ENCODE measurements at regions of chr6 and their contacts with region 1.

Region 1: DNA sequence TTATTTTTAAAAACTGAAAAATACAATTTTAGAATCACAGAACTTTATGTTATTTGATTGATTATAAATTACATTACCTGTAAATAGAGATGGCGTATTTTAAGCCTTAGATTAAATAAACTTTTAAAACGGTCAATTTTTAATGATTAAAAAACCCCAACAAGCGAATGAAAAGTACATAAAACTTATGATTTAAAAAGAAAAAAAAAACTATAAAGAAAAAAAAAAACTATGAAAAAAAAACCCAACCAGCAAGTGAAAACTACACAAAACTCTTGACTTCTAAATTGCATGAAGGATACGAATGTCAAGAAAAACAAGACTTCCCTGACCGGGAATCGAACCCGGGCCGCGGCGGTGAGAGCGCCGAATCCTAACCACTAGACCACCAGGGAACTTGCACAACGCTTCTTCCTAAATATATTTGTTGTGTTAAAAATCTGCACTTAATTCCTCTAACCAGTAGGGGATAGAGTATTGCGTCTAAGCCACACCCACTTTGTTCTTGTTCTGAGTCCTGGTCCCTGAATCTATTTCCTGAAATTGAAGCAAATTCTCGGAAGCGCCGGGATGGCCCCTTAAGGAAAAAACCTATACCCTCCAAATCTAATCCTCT is 10.7 kb upstream of the NCOA7 start:
- DNase-seq: peak; percentile 80 to 95
- H3K4me3 ChIP-seq: peak overlapping the region; percentile 63
- H3K27ac ChIP-seq: peak overlapping the region; percentile 94
- H3K4me1 ChIP-seq: peaks cover 38% of the 10 kb centered on the region
- H3K27me3 ChIP-seq: no peaks in the 10 kb centered on the region
- CTCF ChIP-seq: peak; percentile 31; the same call in 1 of the 2 replicates

Region 2: GRCh38 chr6:124792386-124792785 is 987.6 kb before region 1 on chr6:
- CTCF ChIA-PET with region 1: no interaction called
- POLR2A ChIA-PET with region 1: no interaction called
- intact Hi-C with region 1: no loop called
- DNase-seq: peak in 1 of 2 experiments; percentile 45
- H3K4me3 ChIP-seq: no peak overlapping the region
- H3K27ac ChIP-seq: no peak overlapping the region
- H3K4me1 ChIP-seq: no peaks in the 10 kb centered on the region
- H3K27me3 ChIP-seq: no peaks in the 10 kb centered on the region
- CTCF ChIP-seq: no peak

Region 3: GRCh38 chr6:125790358-125791150 is 10.5 kb after region 1 on chr6 and contains the start of gene NCOA7:
- CTCF ChIA-PET with region 1: interaction called, 4 read pairs
- POLR2A ChIA-PET with region 1: interaction called, 11 read pairs
- intact Hi-C with region 1: no loop called
- DNase-seq: peak; percentile 50 to 78
- H3K4me3 ChIP-seq: peak within 1 kb of the TSS; percentile 75
- H3K27ac ChIP-seq: peak within 1 kb of the TSS; percentile 48
- H3K4me1 ChIP-seq: peaks cover 53% of the 10 kb centered on the region
- H3K27me3 ChIP-seq: no peaks in the 10 kb centered on the region
- CTCF ChIP-seq: no peak
- total RNA-seq, gene NCOA7: 47.6 and 51.0 TPM in 2 replicates

Region 4: DNA sequence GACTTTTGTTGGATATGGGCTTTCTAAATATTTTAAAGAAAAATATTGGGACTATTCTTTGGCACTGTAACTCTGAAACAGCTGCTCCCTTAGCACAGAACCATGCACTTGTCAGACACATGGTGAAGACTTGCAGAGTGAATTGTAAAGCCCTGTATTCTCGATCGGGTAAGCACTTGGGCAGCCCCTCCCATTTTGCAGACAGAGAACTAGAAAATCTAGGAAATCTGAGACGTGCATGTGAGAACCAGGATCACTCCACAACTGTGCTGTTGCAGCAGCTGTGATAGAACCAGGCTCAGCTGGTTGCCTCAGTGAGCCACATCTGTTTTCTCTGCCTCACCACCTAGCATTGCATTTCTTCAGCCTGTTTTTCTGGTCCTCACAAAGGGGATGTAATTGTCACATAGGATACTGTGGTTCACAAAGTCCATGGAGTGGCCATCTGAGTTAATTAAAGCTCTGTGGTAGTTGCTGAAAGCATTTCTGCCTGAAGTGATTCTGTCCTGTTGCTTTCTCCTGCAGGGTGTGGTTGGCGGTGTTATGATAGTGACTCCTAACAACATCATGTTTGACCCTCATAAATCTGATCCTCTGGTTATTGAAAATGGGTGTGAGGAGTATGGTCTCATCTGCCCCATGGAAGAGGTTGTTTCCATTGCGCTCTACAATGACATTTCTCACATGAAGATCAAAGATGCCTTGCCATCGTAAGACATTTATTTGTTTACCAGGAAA is 104.8 kb after region 1 on chr6:
- CTCF ChIA-PET with region 1: no interaction called
- POLR2A ChIA-PET with region 1: interaction called, 11 read pairs
- intact Hi-C with region 1: no loop called
- DNase-seq: no peak
- H3K4me3 ChIP-seq: no peak overlapping the region
- H3K27ac ChIP-seq: no peak overlapping the region
- H3K4me1 ChIP-seq: no peaks in the 10 kb centered on the region
- H3K27me3 ChIP-seq: no peaks in the 10 kb centered on the region
- CTCF ChIP-seq: no peak

Region 5: GRCh38 chr6:125956506-125957390 is 176.7 kb after region 1 on chr6 and contains the start of gene HINT3:
- CTCF ChIA-PET with region 1: interaction called, 13 read pairs
- POLR2A ChIA-PET with region 1: interaction called, 3 read pairs
- intact Hi-C with region 1: loop called (anchors 1 kb)
- DNase-seq: peak; percentile 95 to 97
- H3K4me3 ChIP-seq: peak within 1 kb of the TSS; percentile 92
- H3K27ac ChIP-seq: peak within 1 kb of the TSS; percentile 80
- H3K4me1 ChIP-seq: peaks cover 21% of the 10 kb centered on the region
- H3K27me3 ChIP-seq: no peaks in the 10 kb centered on the region
- CTCF ChIP-seq: peak; percentile 99
- total RNA-seq, gene HINT3: 13.6 and 14.4 TPM in 2 replicates

Region 6: DNA sequence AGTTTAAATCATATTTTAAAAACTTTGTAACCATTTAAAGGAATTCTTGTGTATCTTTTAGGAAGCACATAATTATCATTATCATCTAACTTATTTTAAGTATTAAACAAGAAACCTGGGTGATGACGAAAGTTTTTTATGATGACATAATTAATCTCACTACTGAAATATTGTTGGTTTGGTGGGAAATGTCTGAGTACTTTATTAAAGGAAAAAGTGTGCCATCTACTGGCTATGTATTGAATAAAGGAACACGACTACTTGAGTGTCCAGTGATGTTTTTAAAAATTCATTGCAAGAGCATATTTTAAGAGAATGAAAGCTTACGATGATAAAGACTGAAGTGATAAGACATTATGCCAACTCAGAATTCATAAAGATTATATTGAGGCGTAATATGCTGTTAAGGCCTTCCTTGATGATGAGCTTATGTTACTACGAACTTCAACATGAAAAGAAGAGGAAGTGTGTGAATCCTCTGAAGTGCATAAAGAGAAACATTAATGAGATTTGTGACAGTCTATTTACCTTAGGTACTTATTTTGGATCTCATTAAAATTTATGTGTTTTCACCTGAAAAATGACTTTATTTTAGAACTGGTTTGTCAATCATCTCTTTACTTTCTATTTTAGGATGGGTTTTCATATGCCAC is 194.3 kb after region 1 on chr6:
- CTCF ChIA-PET with region 1: interaction called, 5 read pairs
- POLR2A ChIA-PET with region 1: no interaction called
- intact Hi-C with region 1: loop called (anchors 1 kb)
- DNase-seq: peak in 1 of 2 experiments; percentile 71
- H3K4me3 ChIP-seq: no peak overlapping the region
- H3K27ac ChIP-seq: peak overlapping the region; percentile 78
- H3K4me1 ChIP-seq: 0 out of 2 replicates have a peak, but pooled peaks cover 6% of the 10 kb centered on the region
- H3K27me3 ChIP-seq: no peaks in the 10 kb centered on the region
- CTCF ChIP-seq: peak; percentile 87

Region 7: DNA sequence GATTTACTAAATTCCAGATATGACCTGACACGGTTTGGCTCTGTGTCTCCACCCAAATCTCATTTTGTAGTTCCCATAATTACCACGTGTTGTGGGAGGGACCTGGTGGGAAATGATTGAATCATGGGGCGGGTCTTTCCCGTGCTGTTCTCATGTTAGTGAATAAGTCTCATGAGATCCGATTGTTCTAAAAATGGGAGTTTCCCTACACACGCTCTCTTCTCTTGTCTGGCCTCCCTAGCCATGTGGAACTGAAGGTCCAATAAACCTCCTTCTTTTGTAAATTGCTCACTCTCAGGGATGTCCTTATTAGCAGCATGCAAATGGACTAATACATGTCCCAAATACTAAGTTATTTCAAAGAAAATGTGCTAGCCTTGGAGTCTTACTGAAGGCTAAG is 681.0 kb after region 1 on chr6:
- CTCF ChIA-PET with region 1: no interaction called
- POLR2A ChIA-PET with region 1: no interaction called
- intact Hi-C with region 1: no loop called
- DNase-seq: no peak
- H3K4me3 ChIP-seq: no peak overlapping the region
- H3K27ac ChIP-seq: no peak overlapping the region
- H3K4me1 ChIP-seq: no peaks in the 10 kb centered on the region
- H3K27me3 ChIP-seq: no peaks in the 10 kb centered on the region
- CTCF ChIP-seq: no peak

Region 8: DNA sequence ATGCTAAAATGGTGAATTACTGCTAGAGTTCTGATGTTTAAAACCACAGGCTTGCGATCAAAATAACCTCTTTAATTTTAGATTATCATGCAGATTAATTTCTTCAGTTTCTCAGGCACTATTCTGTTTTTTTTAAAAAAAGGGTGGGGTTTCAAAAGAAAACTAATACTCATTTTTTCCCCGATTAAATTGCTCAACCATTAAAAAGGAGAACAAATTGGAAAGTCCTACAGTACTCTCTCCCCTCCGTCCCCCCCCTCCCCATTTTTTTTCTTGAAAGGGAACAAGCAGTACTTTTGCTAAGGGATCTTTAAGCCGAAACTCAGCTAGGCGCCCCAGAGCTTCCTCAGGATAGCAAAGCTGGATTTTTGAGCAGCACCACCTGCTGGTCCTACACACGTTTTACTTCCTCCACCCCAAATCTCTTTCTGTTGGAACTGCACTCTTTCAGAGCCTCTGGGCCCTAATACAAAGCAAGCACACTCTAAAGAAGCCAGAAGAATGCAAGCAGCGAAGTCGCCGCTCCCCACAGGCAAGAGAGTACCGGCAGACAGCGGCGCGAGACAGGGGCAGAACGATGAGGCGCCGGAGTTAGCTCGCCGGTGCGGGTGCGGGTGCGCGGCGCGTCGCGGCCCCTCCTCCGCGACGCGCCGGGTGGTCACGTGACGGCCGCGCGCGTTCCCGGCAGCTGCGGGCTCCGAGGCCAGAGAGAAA is 1486.3 kb after region 1 on chr6 and contains the start of gene RNF146:
- CTCF ChIA-PET with region 1: no interaction called
- POLR2A ChIA-PET with region 1: no interaction called
- intact Hi-C with region 1: loop called (anchors 10 kb)
- DNase-seq: peak; percentile 76 to 77
- H3K4me3 ChIP-seq: peak within 1 kb of the TSS; percentile 65
- H3K27ac ChIP-seq: peak within 1 kb of the TSS; percentile 85
- H3K4me1 ChIP-seq: peaks cover 30% of the 10 kb centered on the region
- H3K27me3 ChIP-seq: no peaks in the 10 kb centered on the region
- CTCF ChIP-seq: peak; percentile 92
- total RNA-seq, gene RNF146: 26.0 and 28.6 TPM in 2 replicates

Measured in PC-9 (cell line).